Breast epithelium (tissue), 4 donors: ENCODE measurements at regions of chr17 and their contacts with region 1.

Region 1: DNA sequence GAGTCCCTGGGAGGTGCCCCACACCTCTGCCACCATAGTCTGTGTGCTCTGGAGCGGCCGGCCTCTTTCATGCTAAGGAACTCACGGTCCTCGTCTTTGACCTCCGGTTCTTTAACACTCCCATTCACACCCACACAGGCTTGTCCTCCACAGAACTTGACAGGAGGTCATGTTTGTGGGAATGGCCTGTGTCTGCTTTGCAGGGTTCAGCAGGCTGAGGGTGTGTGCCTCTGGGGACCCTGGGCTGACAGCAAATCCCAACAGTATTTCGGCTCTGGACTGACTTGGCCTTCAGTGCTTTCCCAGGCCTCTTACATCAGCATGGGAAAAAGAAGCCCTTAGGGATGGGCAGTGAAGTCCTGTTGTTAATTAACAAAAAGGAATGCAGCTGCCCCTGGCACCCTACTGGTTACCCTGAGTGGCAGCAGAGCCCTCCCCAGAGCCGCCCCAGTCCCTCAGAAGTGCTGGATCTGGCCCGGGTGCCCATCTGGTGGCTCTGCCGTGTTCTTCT is 35.4 kb upstream of the ADORA2B start:
- DNase-seq: no peak
- H3K4me3 ChIP-seq: no peak overlapping the region
- H3K27ac ChIP-seq: no peak overlapping the region
- H3K4me1 ChIP-seq: no peaks in the 10 kb centered on the region
- H3K27me3 ChIP-seq: no peaks in the 10 kb centered on the region
- CTCF ChIP-seq: no peak
- POLR2A ChIP-seq: no peak

Region 2: DNA sequence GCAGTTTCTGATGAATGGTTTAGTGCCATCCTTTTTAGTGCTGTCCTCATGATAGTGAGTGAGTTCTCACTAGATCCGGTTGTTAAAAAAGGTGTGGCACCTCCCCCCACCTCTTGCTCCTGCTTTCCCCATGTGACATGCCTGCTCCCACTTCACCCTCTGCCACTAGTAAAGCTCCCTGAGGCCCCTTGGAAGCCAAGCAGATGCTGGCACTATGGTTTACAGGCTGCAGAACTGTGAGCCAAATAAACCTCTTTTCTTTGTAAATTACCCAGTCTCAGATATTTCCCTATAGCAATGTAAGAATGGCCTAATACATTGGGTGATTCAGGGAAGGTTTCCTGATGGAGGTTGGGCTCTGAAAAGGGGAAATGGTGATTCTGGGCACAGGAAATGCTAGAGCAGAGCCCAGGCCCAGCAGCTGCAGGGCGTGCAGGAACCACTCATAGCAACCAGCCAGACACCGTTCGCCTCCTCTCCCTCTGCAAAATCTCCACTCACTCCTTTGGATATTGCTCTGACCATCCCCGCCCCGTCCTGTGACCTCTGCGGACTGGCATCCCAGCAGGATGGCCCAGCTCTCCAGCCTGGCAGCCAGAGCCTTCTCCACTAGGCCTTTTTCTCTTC is 32.8 kb after region 1 on chr17:
- intact Hi-C with region 1: loop called (anchors 2 kb)
- DNase-seq: no peak
- H3K4me3 ChIP-seq: no peak overlapping the region
- H3K27ac ChIP-seq: no peak overlapping the region
- H3K4me1 ChIP-seq: no peaks in the 10 kb centered on the region
- H3K27me3 ChIP-seq: no peaks in the 10 kb centered on the region
- CTCF ChIP-seq: no peak
- POLR2A ChIP-seq: no peak